MCF 10A (cell line): ENCODE measurements at regions of chr1 and their contacts with region 1.

Region 1: DNA sequence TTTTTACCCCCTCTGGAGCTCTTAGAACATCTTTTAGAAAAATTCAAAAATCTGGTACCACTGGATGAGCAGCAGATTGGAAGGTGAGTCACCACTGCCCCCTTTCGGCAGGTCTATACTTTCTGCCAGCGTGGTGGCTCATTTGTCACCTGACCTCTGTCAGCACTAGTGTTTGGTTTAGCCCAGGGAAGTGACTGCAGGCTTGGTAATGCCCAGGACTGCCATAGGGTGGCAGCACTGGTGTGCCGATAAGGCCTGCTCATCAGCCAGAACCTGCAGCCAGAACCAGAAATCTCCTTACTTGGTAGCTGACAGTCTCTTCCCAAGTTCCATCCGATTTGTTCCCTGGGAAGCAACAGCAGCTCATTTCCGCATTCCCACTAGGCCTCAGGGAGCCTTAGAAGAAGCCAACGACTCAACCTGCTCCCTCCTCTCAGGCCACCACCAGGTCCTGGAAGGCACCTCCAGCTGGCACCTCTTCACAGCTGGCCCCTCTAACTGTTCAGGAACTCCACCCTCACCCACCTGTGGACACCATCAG is 6.8 kb downstream of the SMIM12 start:
- DNase-seq: peak; percentile 94
- H3K4me3 Mint-ChIP-seq: no peak overlapping the region
- H3K27ac Mint-ChIP-seq: no peak overlapping the region
- H3K4me1 Mint-ChIP-seq: peaks cover 10% of the 10 kb centered on the region
- H3K27me3 Mint-ChIP-seq: no peaks in the 10 kb centered on the region
- CTCF ChIP-seq: peak; percentile 92

Region 2: GRCh38 chr1:34452451-34452850 is 400.3 kb before region 1 on chr1:
- CTCF ChIA-PET with region 1: no interaction called
- POLR2A ChIA-PET with region 1: no interaction called
- intact Hi-C with region 1: no loop called
- DNase-seq: no peak
- H3K4me3 Mint-ChIP-seq: no peak overlapping the region
- H3K27ac Mint-ChIP-seq: no peak overlapping the region
- H3K4me1 Mint-ChIP-seq: no peaks in the 10 kb centered on the region
- H3K27me3 Mint-ChIP-seq: no peaks in the 10 kb centered on the region
- CTCF ChIP-seq: no peak

Region 3: GRCh38 chr1:34681480-34682451 is 171.0 kb before region 1 on chr1:
- CTCF ChIA-PET with region 1: no interaction called
- POLR2A ChIA-PET with region 1: no interaction called
- intact Hi-C with region 1: loop called (anchors 10 kb)
- DNase-seq: peak; percentile 73
- H3K4me3 Mint-ChIP-seq: no peak overlapping the region
- H3K27ac Mint-ChIP-seq: no peak overlapping the region
- H3K4me1 Mint-ChIP-seq: no peaks in the 10 kb centered on the region
- H3K27me3 Mint-ChIP-seq: peaks cover 43% of the 10 kb centered on the region
- CTCF ChIP-seq: peak; percentile 69

Region 4: GRCh38 chr1:34786521-34787325 is 66.0 kb before region 1 on chr1:
- CTCF ChIA-PET with region 1: interaction called, 15 read pairs
- POLR2A ChIA-PET with region 1: interaction called, 5 read pairs
- intact Hi-C with region 1: loop called (anchors 1 kb)
- DNase-seq: peak; percentile 68
- H3K4me3 Mint-ChIP-seq: no peak overlapping the region
- H3K27ac Mint-ChIP-seq: no peak overlapping the region
- H3K4me1 Mint-ChIP-seq: peaks cover 32% of the 10 kb centered on the region
- H3K27me3 Mint-ChIP-seq: no peaks in the 10 kb centered on the region
- CTCF ChIP-seq: peak; percentile 83

Region 5: GRCh38 chr1:34816332-34816731 is 36.4 kb before region 1 on chr1:
- CTCF ChIA-PET with region 1: interaction called, 14 read pairs
- POLR2A ChIA-PET with region 1: no interaction called
- intact Hi-C with region 1: no loop called
- DNase-seq: no peak
- H3K4me3 Mint-ChIP-seq: no peak overlapping the region
- H3K27ac Mint-ChIP-seq: no peak overlapping the region
- H3K4me1 Mint-ChIP-seq: no peaks in the 10 kb centered on the region
- H3K27me3 Mint-ChIP-seq: no peaks in the 10 kb centered on the region
- CTCF ChIP-seq: no peak

Region 6: GRCh38 chr1:34865981-34866761 is 13.4 kb after region 1 on chr1:
- CTCF ChIA-PET with region 1: interaction called, 33 read pairs
- POLR2A ChIA-PET with region 1: interaction called, 4 read pairs
- intact Hi-C with region 1: no loop called
- DNase-seq: peak; percentile 76
- H3K4me3 Mint-ChIP-seq: peak overlapping the region; percentile 73
- H3K27ac Mint-ChIP-seq: peak overlapping the region; percentile 51
- H3K4me1 Mint-ChIP-seq: no peaks in the 10 kb centered on the region
- H3K27me3 Mint-ChIP-seq: peaks cover 31% of the 10 kb centered on the region
- CTCF ChIP-seq: peak; percentile 94